Activated B cell treated with CpG ODN at 0.5 μM for 24 hours (primary cell): ENCODE measurements at regions of chr17 and their contacts with region 1.

Region 1: GRCh38 chr17:79915850-79916430 is 76.7 kb upstream of the CBX4 start:
- DNase-seq: no peak
- ATAC-seq: no peak
- H3K4me3 Mint-ChIP-seq: no peak overlapping the region
- H3K27ac Mint-ChIP-seq: no peak overlapping the region
- H3K4me1 Mint-ChIP-seq: peaks cover 13% of the 10 kb centered on the region
- H3K27me3 Mint-ChIP-seq: no peaks in the 10 kb centered on the region
- CTCF ChIP-seq: no peak

Region 2: GRCh38 chr17:79970576-79971068 is 54.7 kb after region 1 on chr17:
- CTCF ChIA-PET with region 1: interaction called, 6 read pairs
- POLR2A ChIA-PET with region 1: interaction called, 10 read pairs
- intact Hi-C with region 1: no loop called
- DNase-seq: no peak
- ATAC-seq: peak; percentile 60
- H3K4me3 Mint-ChIP-seq: no peak overlapping the region
- H3K27ac Mint-ChIP-seq: no peak overlapping the region
- H3K4me1 Mint-ChIP-seq: peaks cover 29% of the 10 kb centered on the region
- H3K27me3 Mint-ChIP-seq: no peaks in the 10 kb centered on the region
- CTCF ChIP-seq: no peak